Psoas muscle (tissue), 8 donors: ENCODE measurements at regions of chr5 and their contacts with region 1.

Region 1: GRCh38 chr5:69404659-69405330 is 10.1 kb upstream of the MARVELD2 start:
- DNase-seq: no peak
- ATAC-seq: no peak
- H3K4me3 ChIP-seq: no peak overlapping the region
- H3K27ac ChIP-seq: no peak overlapping the region
- H3K4me1 ChIP-seq: no peaks in the 10 kb centered on the region
- H3K27me3 ChIP-seq: no peaks in the 10 kb centered on the region
- CTCF ChIP-seq: no peak

Region 2: DNA sequence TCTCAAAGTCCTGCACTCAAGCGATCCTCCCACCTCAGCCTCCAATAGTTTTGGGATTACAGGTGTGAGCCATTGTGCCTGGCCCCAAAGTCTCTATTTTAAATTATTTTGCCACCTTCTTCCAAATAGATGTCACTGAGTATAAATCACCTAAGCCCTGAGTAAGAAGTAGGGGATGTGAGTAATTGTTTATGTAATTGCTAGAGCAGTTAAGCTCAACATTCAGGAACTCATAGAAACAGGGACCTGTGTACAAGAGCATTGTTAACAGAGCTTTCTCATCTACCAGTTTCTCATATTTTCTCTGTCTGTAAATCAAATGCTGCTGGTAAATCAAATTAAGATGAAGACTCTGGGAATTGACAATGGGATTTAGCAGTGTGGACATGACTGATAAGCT is 143.8 kb before region 1 on chr5:
- intact Hi-C with region 1: loop called in 1 of 2 experiments (anchors 5 kb)
- DNase-seq: no peak
- ATAC-seq: no peak
- H3K4me3 ChIP-seq: no peak overlapping the region
- H3K27ac ChIP-seq: no peak overlapping the region
- H3K4me1 ChIP-seq: no peaks in the 10 kb centered on the region
- H3K27me3 ChIP-seq: no peaks in the 10 kb centered on the region
- CTCF ChIP-seq: no peak

Region 3: GRCh38 chr5:69293895-69294294 is 110.9 kb before region 1 on chr5:
- intact Hi-C with region 1: no loop called
- DNase-seq: no peak
- ATAC-seq: no peak
- H3K4me3 ChIP-seq: no peak overlapping the region
- H3K27ac ChIP-seq: no peak overlapping the region
- H3K4me1 ChIP-seq: no peaks in the 10 kb centered on the region
- H3K27me3 ChIP-seq: no peaks in the 10 kb centered on the region
- CTCF ChIP-seq: no peak

Region 4: GRCh38 chr5:69350664-69351063 is 54.1 kb before region 1 on chr5:
- intact Hi-C with region 1: no loop called
- DNase-seq: no peak
- ATAC-seq: no peak
- H3K4me3 ChIP-seq: no peak overlapping the region
- H3K27ac ChIP-seq: no peak overlapping the region
- H3K4me1 ChIP-seq: no peaks in the 10 kb centered on the region
- H3K27me3 ChIP-seq: no peaks in the 10 kb centered on the region
- CTCF ChIP-seq: no peak

Region 5: GRCh38 chr5:69414885-69415583 is 10.2 kb after region 1 on chr5 and contains the start of gene MARVELD2:
- intact Hi-C with region 1: no loop called
- DNase-seq: peak; percentile 40 to 60
- ATAC-seq: peak in 3 of 4 donors; percentile 23 to 37 (median 30)
- H3K4me3 ChIP-seq: peak within 1 kb of the TSS; percentile 56
- H3K27ac ChIP-seq: no peak within 1 kb of the TSS
- H3K4me1 ChIP-seq: no peaks in the 10 kb centered on the region
- H3K27me3 ChIP-seq: no peaks in the 10 kb centered on the region
- CTCF ChIP-seq: no peak
- total RNA-seq, gene MARVELD2: 0.10 to 0.25 (median 0.19) TPM in 3 of 4 donors, not detected in the other